Activated T-helper 1 cell treated with anti-CD3 and anti-CD28 coated beads, Interleukin-12 subunit alpha, Interleukin-12 subunit beta, Interleukin-2, Interleukin-4 antibody, amounts not matched to agents 30 ng/mL and 10 ng/mL and 1 ng/mL, durations not matched to agents 14 hours and 24 hours and 36 hours (primary cell): ENCODE measurements at regions of chr1 and their contacts with region 1.

Region 1: DNA sequence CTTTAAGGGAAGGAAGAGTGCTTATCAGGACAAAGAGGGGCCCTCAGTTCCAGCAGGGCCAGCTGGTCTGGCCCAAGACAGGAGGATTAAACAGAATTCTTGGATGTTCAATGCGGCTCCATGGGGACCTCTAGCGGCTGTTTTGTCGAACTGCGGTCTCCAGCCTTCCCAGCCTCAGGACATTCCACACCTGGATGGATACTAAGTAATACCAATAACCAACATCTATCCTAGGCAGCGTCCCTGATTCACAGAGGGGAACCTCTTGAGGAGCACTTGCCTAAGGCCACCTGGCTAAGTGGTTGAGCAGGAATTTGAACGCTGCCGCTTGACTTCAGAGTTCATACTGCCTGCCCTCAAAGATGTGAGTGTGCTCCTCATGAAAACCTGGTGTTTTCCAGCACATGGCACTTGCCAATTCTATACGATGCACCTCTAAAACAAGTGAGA is 15.5 kb upstream of the CD247 start:
- DNase-seq: peak; percentile 51
- H3K4me3 Mint-ChIP-seq: no peak overlapping the region
- H3K27ac Mint-ChIP-seq: no peak overlapping the region
- H3K4me1 Mint-ChIP-seq: peaks cover 5% of the 10 kb centered on the region
- H3K27me3 Mint-ChIP-seq: peaks cover 7% of the 10 kb centered on the region

Region 2: DNA sequence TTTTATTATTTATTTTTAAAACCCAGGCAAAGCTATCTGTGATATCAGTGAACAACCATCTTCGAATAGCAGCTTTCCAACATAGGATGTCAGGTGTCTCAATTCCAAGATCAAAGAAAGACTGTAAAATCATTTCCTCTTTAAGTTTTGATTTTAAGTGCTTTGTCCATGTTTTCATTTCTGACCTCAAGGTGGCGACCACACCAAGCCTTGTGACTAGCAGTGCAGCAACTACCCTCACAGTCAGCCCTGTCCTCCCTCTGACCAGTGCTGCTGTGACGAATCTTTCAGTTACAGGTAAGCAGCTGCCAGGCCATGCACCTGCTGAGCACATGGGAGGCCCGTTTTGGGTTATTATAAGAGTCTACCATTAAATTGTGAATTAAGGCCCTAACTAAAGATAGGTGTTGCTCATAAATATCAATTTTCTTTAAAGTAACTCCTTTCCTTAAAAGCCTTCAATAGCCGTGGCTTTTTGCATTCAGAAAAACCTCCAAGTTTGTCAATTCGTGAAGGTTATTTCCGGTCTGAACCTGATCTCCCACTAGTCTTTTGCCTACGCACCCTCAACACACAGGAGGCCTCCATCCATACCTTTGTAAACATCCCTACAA is 132.5 kb before region 1 on chr1:
- intact Hi-C with region 1: loop called (anchors 1 kb)
- DNase-seq: peak; percentile 12
- H3K4me3 Mint-ChIP-seq: no peak overlapping the region
- H3K27ac Mint-ChIP-seq: no peak overlapping the region
- H3K4me1 Mint-ChIP-seq: no peaks in the 10 kb centered on the region
- H3K27me3 Mint-ChIP-seq: no peaks in the 10 kb centered on the region